Mammary epithelial cell (primary cell): ENCODE measurements at regions of chr15 and their contacts with region 1.

Region 1: GRCh38 chr15:94670438-94671034 is 439.2 kb downstream of the MCTP2 start:
- DNase-seq: peak; percentile 40
- H3K4me3 ChIP-seq: no peak overlapping the region
- H3K27ac ChIP-seq: no peak overlapping the region
- H3K4me1 ChIP-seq: peaks cover 16% of the 10 kb centered on the region
- H3K27me3 ChIP-seq: no peaks in the 10 kb centered on the region
- CTCF ChIP-seq: peak; percentile 68 to 69

Region 2: DNA sequence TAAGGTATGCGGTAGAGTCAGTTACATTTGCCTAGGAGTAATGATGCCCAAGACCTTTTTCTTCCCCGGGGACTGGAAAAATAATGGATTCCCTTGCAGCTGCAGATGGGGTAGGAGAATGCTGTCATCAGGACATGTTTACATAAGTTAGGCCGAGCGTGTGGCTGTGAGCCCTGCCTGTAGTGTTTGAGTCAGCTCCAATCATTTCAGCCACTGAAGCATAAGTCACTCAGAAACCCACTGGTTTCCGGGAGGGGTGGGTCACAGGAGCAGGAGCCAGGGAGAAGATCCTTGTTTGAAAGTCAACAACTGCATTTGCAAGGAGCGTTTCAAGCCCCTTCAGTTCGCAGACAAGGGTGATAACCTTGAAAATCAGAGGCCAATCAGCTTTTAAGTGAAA is 123.1 kb after region 1 on chr15:
- CTCF ChIA-PET with region 1: no interaction called
- dilution Hi-C with region 1: no loop called
- in situ Hi-C with region 1: no loop called
- intact Hi-C with region 1: loop called (anchors 1 kb)
- DNase-seq: peak; percentile 41
- H3K4me3 ChIP-seq: no peak overlapping the region
- H3K27ac ChIP-seq: no peak overlapping the region
- H3K4me1 ChIP-seq: peaks cover 27% of the 10 kb centered on the region
- H3K27me3 ChIP-seq: no peaks in the 10 kb centered on the region
- CTCF ChIP-seq: no peak

Region 3: GRCh38 chr15:94909489-94909888 is 239.0 kb after region 1 on chr15:
- CTCF ChIA-PET with region 1: no interaction called
- dilution Hi-C with region 1: no loop called
- in situ Hi-C with region 1: no loop called
- intact Hi-C with region 1: loop called (anchors 1 kb)
- DNase-seq: peak; percentile 13
- H3K4me3 ChIP-seq: no peak overlapping the region
- H3K27ac ChIP-seq: no peak overlapping the region
- H3K4me1 ChIP-seq: peaks cover 9% of the 10 kb centered on the region
- H3K27me3 ChIP-seq: no peaks in the 10 kb centered on the region
- CTCF ChIP-seq: no peak

Region 4: GRCh38 chr15:95025924-95026728 is 355.6 kb after region 1 on chr15:
- CTCF ChIA-PET with region 1: no interaction called
- dilution Hi-C with region 1: no loop called
- in situ Hi-C with region 1: loop called in 1 of 2 experiments (anchors 10 kb)
- intact Hi-C with region 1: loop called (anchors 1 kb)
- DNase-seq: peak; percentile 50
- H3K4me3 ChIP-seq: no peak overlapping the region
- H3K27ac ChIP-seq: no peak overlapping the region
- H3K4me1 ChIP-seq: no peaks in the 10 kb centered on the region
- H3K27me3 ChIP-seq: no peaks in the 10 kb centered on the region
- CTCF ChIP-seq: peak; percentile 62 to 80

Region 5: GRCh38 chr15:95259513-95259912 is 589.0 kb after region 1 on chr15:
- CTCF ChIA-PET with region 1: interaction called, 16 read pairs
- dilution Hi-C with region 1: no loop called
- in situ Hi-C with region 1: loop called in 1 of 2 experiments (anchors 25 kb)
- intact Hi-C with region 1: loop called (anchors 5 kb)
- DNase-seq: peak; percentile 58
- H3K4me3 ChIP-seq: no peak overlapping the region
- H3K27ac ChIP-seq: no peak overlapping the region
- H3K4me1 ChIP-seq: peaks cover 18% of the 10 kb centered on the region
- H3K27me3 ChIP-seq: no peaks in the 10 kb centered on the region
- CTCF ChIP-seq: peak; percentile 67 to 81

Region 6: GRCh38 chr15:96158938-96159337 is 1488.4 kb after region 1 on chr15:
- CTCF ChIA-PET with region 1: no interaction called
- dilution Hi-C with region 1: no loop called
- in situ Hi-C with region 1: no loop called
- intact Hi-C with region 1: loop called (anchors 10 kb)
- DNase-seq: no peak
- H3K4me3 ChIP-seq: no peak overlapping the region
- H3K27ac ChIP-seq: no peak overlapping the region
- H3K4me1 ChIP-seq: no peaks in the 10 kb centered on the region
- H3K27me3 ChIP-seq: no peaks in the 10 kb centered on the region
- CTCF ChIP-seq: no peak

Region 7: GRCh38 chr15:96585484-96586386 is 1915.2 kb after region 1 on chr15:
- CTCF ChIA-PET with region 1: no interaction called
- dilution Hi-C with region 1: no loop called
- in situ Hi-C with region 1: no loop called
- intact Hi-C with region 1: loop called (anchors 5 kb)
- DNase-seq: no peak
- H3K4me3 ChIP-seq: no peak overlapping the region
- H3K27ac ChIP-seq: no peak overlapping the region
- H3K4me1 ChIP-seq: no peaks in the 10 kb centered on the region
- H3K27me3 ChIP-seq: peaks cover 4% of the 10 kb centered on the region
- CTCF ChIP-seq: peak; percentile 12 to 39